ENCODE measurements at regions of chr1 and their contacts with region 1.

Region 1: GRCh38 chr1:37890378-37891014 is 31.1 kb upstream of the MTF1 start:
- DNase-seq: peak; percentile 4
- H3K4me3 ChIP-seq: no peak overlapping the region
- CTCF ChIP-seq: no peak

Region 2: DNA sequence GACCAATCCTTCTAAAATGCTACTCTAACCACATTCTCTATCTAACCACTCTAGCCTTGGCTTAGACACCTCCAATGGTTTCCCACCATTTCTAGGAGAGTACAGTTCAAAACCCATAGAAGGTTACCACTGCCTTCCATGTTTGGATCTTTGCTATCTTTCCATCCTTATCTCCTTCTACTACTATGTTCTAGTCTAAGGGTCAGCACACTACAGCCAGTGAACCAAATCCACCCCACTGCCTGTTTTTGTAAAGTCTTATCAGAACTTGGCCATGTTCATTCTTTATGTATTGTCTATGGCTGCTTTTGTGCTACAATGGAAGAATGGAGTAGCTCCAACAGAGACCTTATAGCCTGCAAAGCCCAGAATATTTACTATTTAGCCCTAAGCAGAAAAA is 37.3 kb before region 1 on chr1:
- CTCF ChIA-PET with region 1: no interaction called
- POLR2A ChIA-PET with region 1: no interaction called
- DNase-seq: no peak
- H3K4me3 ChIP-seq: no peak overlapping the region
- CTCF ChIP-seq: no peak

Region 3: DNA sequence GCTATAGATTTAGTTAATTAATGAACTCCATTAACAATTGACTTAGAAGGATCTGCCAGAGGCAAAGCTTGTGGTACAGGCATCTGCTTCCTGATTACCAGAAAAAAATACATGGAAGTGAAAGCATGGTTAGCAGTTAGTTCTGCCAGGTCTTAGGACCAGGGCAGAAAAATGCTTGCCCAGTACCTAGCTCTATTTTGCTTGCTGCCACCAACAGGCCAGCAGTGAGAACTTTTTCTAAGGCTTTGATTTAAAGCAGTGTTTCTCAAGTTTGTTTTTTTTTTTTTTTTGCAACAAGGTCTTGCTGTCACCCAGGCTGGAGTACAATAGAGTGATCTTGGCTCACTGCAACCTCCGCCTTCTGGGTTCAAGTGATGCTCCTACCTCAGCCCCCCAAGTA is 14.7 kb before region 1 on chr1:
- CTCF ChIA-PET with region 1: interaction called, 15 read pairs
- POLR2A ChIA-PET with region 1: no interaction called
- DNase-seq: no peak
- H3K4me3 ChIP-seq: no peak overlapping the region
- CTCF ChIP-seq: peak; percentile 13

Region 4: DNA sequence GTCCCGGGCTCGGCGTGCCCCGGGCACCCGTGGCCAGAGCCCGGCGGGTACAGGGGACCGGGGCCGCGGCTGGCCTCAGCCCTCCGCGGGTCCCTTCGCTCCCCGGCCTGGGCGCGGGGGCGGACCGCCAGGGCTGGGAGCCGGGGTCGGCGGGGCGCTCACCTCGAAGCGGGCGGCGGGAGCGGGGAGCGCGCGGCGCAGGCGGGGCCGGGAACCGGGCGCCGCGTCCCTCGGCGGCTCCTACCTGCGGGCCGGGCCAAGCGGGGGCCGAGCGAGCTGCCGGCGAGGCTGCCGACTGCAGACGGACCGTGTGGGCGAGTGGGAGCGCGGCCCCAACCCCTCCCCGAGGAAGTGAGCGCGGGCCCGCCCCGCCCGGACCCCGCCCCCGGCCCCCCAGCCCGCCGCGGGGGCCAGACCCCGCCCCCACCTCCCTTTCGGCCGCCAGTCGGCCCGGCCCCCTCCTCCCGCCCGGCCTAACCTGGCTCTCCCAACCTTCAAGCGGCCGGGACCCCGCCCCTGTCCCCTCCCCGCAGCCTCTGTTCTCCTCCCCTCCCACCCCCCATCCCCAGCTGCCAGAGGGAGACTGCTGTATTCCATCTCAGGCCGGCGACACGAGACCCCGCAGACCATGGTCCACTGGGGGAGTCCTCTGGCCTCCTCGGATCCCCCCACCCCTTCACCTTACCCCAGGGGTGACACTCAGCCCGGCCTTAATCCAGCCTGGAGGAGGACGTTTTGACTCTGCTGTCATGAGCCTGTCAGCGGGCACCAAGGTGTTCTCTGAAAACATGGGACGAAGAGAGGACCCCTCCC is 114.9 kb after region 1 on chr1 and contains the start of gene FHL3:
- CTCF ChIA-PET with region 1: no interaction called
- POLR2A ChIA-PET with region 1: no interaction called
- DNase-seq: no peak
- H3K4me3 ChIP-seq: peak within 1 kb of the TSS; percentile 93
- CTCF ChIP-seq: no peak

Measured in AG04449 (cell line).